Activated naive CD8-positive, alpha-beta T cell treated with anti-CD3 and anti-CD28 coated beads, Interleukin-2, amount 10 ng/mL, durations not matched to agents 7 days and 5 days (primary cell): ENCODE measurements at regions of chr5 and their contacts with region 1.

Region 1: GRCh38 chr5:69189162-69190086 is at the start of gene CENPH:
- DNase-seq: peak; percentile 94
- ATAC-seq: peak; percentile 86
- H3K4me3 Mint-ChIP-seq: peak within 1 kb of the TSS; percentile 92
- H3K27ac Mint-ChIP-seq: peak within 1 kb of the TSS; percentile 95
- H3K4me1 Mint-ChIP-seq: peaks cover 16% of the 10 kb centered on the region
- H3K27me3 Mint-ChIP-seq: no peaks in the 10 kb centered on the region
- total RNA-seq, gene CENPH: 41.3 to 42.8 TPM

Region 2: GRCh38 chr5:69148586-69149360 is 40.7 kb before region 1 on chr5:
- POLR2A ChIA-PET with region 1: no interaction called
- DNase-seq: no peak
- ATAC-seq: no peak
- H3K4me3 Mint-ChIP-seq: no peak overlapping the region
- H3K27ac Mint-ChIP-seq: no peak overlapping the region
- H3K4me1 Mint-ChIP-seq: no peaks in the 10 kb centered on the region
- H3K27me3 Mint-ChIP-seq: peaks cover under 1% of the 10 kb centered on the region

Region 3: DNA sequence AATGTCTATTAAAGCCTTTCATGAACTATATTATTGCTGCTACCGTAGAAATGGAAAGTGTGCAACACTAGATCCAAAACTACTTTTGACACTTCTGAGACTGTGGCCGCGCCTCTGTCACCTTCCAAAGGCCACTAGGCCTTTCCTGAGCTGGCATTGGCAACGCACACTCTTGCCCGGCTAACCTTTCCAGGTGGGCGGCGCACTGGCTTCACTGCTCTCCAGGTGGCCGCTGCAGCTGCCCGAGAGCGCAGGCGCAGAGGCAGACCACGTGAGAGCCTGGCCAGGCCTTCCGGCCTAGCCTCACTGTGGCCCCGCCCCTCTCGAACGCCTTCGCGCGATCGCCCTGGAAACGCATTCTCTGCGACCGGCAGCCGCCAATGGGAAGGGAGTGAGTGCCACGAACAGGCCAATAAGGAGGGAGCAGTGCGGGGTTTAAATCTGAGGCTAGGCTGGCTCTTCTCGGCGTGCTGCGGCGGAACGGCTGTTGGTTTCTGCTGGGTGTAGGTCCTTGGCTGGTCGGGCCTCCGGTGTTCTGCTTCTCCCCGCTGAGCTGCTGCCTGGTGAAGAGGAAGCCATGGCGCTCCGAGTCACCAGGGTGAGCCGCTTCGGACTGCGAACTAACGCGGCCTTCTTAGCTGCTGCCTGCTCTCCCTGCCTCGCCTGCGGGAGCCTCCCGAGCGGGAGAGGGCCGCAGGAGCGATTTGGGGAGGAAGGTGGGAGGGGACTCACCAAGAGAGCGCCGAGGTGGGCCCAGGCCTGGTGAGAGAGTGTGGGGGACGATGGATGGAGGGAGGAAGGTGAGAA is 22.5 kb before region 1 on chr5 and contains the start of gene CCNB1:
- POLR2A ChIA-PET with region 1: interaction called, 34 read pairs
- DNase-seq: peak; percentile 98
- ATAC-seq: peak; percentile 98
- H3K4me3 Mint-ChIP-seq: peak within 1 kb of the TSS; percentile 97
- H3K27ac Mint-ChIP-seq: peak within 1 kb of the TSS; percentile 96
- H3K4me1 Mint-ChIP-seq: peaks cover 36% of the 10 kb centered on the region
- H3K27me3 Mint-ChIP-seq: no peaks in the 10 kb centered on the region
- total RNA-seq, gene CCNB1: 116 to 118 TPM

Region 4: DNA sequence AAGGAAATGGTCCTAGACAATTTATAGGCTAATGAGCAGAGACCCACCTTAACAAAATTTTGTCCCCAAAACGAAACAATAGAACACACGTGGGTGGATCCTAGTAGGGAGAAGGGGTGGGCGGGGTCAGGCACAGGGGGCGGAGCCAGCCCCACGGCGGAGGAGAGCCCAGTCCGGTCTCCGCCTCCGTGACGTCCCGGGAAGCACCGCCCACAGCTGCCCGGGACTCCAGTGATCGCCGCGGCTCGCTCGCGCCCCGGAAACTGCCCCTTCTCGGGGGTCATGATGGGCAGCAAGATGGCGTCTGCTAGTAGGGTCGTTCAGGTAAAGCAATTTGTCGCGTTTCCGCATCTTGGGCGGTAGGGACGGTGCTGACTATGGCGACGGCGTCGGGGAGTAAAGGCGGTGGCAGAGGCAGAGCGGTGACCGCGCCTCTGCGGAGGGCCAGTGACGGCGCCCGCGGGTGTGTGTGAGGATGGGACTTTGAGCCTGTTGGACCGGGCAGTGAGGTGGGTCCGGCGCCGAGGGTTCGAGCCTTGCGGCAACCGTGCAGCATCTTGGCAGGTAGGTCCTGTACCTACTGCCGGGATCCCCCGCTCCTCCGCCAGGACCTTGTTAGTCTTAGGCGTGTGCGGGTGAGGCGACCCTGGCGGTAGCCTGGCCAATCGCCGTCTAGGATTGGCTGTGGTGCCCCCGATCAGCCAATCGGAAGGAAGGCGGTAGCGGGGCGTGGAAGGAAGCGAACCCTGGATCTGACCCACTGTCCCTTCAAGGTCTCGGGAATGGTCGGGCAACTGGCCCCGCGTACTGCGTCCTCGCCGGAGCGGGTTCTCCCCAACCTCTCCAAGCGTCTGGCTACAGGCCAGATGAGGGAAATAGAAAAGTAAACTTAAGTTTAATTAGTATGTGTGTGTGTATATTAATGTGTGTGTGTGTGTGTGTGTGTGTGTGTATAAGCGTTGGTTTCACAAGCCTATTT is 28.4 kb after region 1 on chr5:
- POLR2A ChIA-PET with region 1: interaction called, 14 read pairs
- DNase-seq: peak; percentile 94
- ATAC-seq: peak; percentile 93
- H3K4me3 Mint-ChIP-seq: peak overlapping the region; percentile 98
- H3K27ac Mint-ChIP-seq: peak overlapping the region; percentile 99
- H3K4me1 Mint-ChIP-seq: peaks cover 12% of the 10 kb centered on the region
- H3K27me3 Mint-ChIP-seq: no peaks in the 10 kb centered on the region

Region 5: DNA sequence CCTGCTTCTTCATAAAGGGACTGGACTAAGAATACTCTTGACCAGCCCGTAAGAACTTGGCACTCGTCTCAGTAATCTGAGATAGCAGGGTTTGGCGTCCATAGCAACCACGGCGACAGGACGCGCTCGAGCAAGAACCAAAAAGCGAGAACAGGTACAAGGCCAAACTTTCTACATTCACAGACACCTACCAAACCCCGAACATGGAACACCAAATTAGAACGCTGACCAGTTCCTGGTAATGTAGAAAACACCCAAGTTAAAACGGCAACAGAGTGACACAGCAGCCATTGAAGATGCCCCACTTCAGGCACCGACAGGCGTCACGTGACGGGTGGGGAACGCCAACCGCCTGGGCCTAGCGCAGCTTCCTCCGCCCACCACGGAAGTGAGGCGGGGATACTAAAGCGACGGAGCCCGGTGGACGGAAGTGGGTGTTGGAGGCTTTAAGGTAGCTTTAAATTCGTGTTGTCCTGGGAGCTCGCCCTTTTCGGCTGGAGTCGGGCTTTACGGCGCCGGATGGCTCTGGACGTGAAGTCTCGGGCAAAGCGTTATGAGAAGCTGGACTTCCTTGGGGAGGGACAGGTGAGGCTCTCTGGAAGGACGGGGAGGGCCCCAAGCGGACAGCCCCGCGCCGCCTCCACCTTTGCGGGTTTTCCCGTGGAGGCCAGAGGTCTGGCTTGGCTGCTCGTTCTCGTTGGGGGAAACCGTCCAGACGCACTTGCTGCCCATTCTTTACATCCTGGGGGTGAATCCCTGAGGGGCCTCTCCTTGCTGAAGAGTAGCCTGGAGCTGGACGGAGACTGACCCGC is 45.2 kb after region 1 on chr5 and contains the start of gene CDK7:
- POLR2A ChIA-PET with region 1: interaction called, 14 read pairs
- DNase-seq: peak; percentile 89
- ATAC-seq: peak; percentile 100
- H3K4me3 Mint-ChIP-seq: peak within 1 kb of the TSS; percentile 97
- H3K27ac Mint-ChIP-seq: peak within 1 kb of the TSS; percentile 83
- H3K4me1 Mint-ChIP-seq: peaks cover 21% of the 10 kb centered on the region
- H3K27me3 Mint-ChIP-seq: no peaks in the 10 kb centered on the region
- total RNA-seq, gene CDK7: 21.2 to 23.7 TPM